Activated T-helper 2 cell treated with anti-CD3 and anti-CD28 coated beads, Interferon-gamma antibody, Interleukin-2, Interleukin-4, amounts not matched to agents 10 μg/mL and 5 μg/mL and 100 μg/mL, durations not matched to agents 14 hours and 24 hours and 36 hours (primary cell): ENCODE measurements at regions of chr1 and their contacts with region 1.

Region 1: GRCh38 chr1:67700692-67701410 is 15.8 kb downstream of the GADD45A start:
- DNase-seq: no peak
- H3K4me3 Mint-ChIP-seq: no peak overlapping the region
- H3K27ac Mint-ChIP-seq: peak overlapping the region; percentile 83
- H3K4me1 Mint-ChIP-seq: peaks cover 22% of the 10 kb centered on the region
- H3K27me3 Mint-ChIP-seq: peaks cover 4% of the 10 kb centered on the region

Region 2: DNA sequence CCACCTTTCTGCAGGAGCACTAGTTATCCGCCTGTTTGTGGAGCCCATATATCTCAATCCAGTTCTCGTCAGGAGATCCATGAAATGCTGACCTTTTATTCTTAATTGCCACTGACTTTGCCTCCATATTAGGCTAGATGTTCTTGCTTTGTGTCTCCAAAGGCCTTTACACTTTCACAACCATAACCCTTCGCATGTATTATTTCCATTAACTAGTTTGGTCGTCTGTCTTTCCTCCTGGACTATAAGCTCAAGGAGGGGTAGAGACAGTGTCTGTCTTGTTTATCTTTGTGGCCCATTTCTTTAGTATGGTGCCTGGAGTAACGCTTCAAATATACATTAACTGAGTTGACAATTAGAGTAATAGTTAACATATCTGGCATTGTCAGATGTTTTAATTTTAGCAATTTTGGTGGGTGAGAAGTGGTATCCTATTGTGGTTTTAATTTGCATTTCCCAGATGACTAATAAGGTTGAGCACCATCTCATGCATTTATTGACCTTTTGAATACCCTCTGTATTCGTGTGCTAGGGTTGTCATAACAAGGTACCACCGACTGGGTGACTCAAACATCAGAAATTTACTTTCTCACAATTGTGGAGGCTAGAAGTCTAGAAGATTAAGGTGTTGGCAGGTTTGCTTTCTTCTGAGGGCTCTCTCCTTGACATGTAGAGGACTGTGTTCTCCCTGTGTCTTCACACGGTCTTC is 414.9 kb before region 1 on chr1:
- intact Hi-C with region 1: no loop called
- DNase-seq: no peak
- H3K4me3 Mint-ChIP-seq: no peak overlapping the region
- H3K27ac Mint-ChIP-seq: peak overlapping the region; percentile 78
- H3K4me1 Mint-ChIP-seq: peaks cover 27% of the 10 kb centered on the region
- H3K27me3 Mint-ChIP-seq: no peaks in the 10 kb centered on the region

Region 3: DNA sequence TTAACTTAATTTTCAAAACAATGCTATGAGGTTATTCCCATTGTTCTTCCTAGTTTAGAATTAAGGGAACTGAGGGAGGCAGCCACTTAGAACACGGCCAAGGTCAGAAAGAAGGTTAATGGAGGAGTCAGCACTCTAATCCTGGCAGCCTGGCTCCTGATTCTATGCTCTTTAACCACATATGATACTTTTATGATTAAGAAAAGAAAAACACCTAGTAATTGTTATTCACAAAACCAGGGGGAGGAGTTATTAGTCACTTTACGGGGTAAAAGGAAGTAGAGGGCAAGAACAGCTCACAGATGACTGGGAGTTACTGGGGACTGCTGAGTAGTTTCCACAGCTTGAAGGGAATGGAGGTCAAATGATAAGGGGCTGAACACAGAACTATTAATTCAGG is 22.8 kb after region 1 on chr1:
- intact Hi-C with region 1: loop called (anchors 2 kb)
- DNase-seq: no peak
- H3K4me3 Mint-ChIP-seq: no peak overlapping the region
- H3K27ac Mint-ChIP-seq: no peak overlapping the region
- H3K4me1 Mint-ChIP-seq: peaks cover 5% of the 10 kb centered on the region
- H3K27me3 Mint-ChIP-seq: peaks cover 5% of the 10 kb centered on the region

Region 4: GRCh38 chr1:67735806-67736627 is 35.2 kb after region 1 on chr1:
- intact Hi-C with region 1: no loop called
- DNase-seq: peak; percentile 24
- H3K4me3 Mint-ChIP-seq: peak overlapping the region; percentile 55
- H3K27ac Mint-ChIP-seq: peak overlapping the region; percentile 68
- H3K4me1 Mint-ChIP-seq: peaks cover 17% of the 10 kb centered on the region
- H3K27me3 Mint-ChIP-seq: no peaks in the 10 kb centered on the region